HCT116 (cell line): ENCODE measurements at regions of chr22 and their contacts with region 1.

Region 1: GRCh38 chr22:16949561-16949960 is 58.5 kb downstream of the GAB4 start:
- DNase-seq: peak; percentile 29
- ATAC-seq: peak; percentile 92
- H3K4me3 ChIP-seq: no peak overlapping the region
- H3K27ac ChIP-seq: no peak overlapping the region
- H3K4me1 ChIP-seq: peaks cover 11 to 16% of the 10 kb centered on the region in 2 experiments
- H3K27me3 ChIP-seq: no peaks in the 10 kb centered on the region
- CTCF ChIP-seq: no peak
- POLR2A ChIP-seq: no peak
- RAD21 ChIP-seq: no peak

Region 2: DNA sequence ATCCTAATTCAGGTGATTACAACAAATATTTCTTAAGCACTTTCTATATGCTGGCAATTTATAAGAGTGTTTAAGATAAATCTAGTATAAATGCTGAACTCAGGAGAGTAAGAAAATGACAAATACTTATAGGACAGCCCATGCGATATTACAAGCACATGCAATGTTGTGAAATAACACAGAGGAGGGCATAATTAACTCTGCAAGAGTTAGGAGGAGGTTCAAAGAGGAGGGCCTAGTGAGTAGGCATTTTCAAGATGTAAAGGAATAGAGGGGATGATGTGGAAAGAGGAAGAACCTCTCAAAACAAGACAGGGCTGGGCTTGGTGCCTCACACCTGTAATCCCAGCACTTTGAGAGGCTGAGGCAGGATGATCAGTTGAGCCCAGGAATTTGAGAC is 98.1 kb after region 1 on chr22:
- CTCF ChIA-PET with region 1: no interaction called
- POLR2A ChIA-PET with region 1: no interaction called
- RAD21 ChIA-PET with region 1: no interaction called
- intact Hi-C with region 1: loop called (anchors 5 kb)
- DNase-seq: no peak
- ATAC-seq: no peak
- H3K4me3 ChIP-seq: no peak overlapping the region
- H3K27ac ChIP-seq: no peak overlapping the region
- H3K4me1 ChIP-seq: no peaks in the 10 kb centered on the region
- H3K27me3 ChIP-seq: no peaks in the 10 kb centered on the region
- CTCF ChIP-seq: no peak
- POLR2A ChIP-seq: no peak
- RAD21 ChIP-seq: no peak